A549 (cell line): ENCODE measurements at regions of chr20 and their contacts with region 1.

Region 1: DNA sequence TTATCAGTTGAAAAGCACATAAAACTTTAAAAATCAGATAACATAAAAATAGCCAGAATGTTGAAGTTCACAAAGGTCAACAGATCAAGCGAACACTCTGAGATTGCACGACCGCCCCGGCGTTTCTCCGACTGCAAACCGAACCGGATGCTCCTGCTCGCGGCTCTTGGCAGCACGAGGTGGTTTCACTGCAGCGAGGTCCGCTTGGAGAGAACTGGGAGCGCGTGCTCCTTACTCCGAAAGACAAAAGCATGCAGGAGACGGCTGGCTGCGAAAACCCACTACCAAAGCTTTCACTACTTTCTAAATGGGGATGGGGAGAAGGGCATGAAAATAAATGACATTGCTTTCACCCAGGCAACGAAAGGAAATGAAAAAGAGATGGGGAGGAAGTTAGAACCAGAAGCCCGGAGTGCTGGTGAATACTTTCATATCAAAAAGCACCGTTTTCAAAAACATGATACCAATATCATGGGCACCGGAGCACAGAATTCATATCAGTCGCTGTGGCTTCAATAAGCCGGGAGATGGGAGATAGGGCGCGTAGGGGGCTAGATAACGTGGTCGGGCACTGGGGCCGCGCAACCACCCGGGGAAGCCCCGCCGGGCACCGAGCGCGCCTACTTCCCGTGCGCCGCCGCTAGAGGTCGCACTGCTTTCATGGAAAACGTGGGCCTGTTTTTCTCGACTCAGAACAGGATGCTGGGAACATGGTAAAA is 8.3 kb upstream of the ANKRD60 start:
- DNase-seq: peak; percentile 67 to 84
- ATAC-seq: peak; percentile 94 to 95
- H3K4me3 ChIP-seq: peak overlapping the region; percentile 53
- H3K27ac ChIP-seq: peak overlapping the region; percentile 52 to 74; a peak in 5 of 6 replicates
- H3K4me1 ChIP-seq: peaks cover 4% of the 10 kb centered on the region; the same call in 1 of the 3 replicates
- CTCF ChIP-seq: peak; percentile 93
- EP300 ChIP-seq: no peak
- POLR2A ChIP-seq: no peak
- RAD21 ChIP-seq: peak; percentile 89 to 93

Region 2: GRCh38 chr20:58219301-58219700 is 17.5 kb before region 1 on chr20:
- CTCF ChIA-PET with region 1: interaction called, 29 read pairs
- POLR2A ChIA-PET with region 1: no interaction called
- DNase-seq: peak in 1 of 2 experiments; percentile 51
- ATAC-seq: peak in 1 of 2 experiments; percentile 39; a peak in 2 of 6 replicates
- H3K4me3 ChIP-seq: no peak overlapping the region
- H3K27ac ChIP-seq: 0 out of 6 replicates have a peak overlapping the region, but pooled peaks of 1 of the 2 experiments have one; percentile 8
- H3K4me1 ChIP-seq: no peaks in the 10 kb centered on the region
- CTCF ChIP-seq: no peak
- EP300 ChIP-seq: no peak
- POLR2A ChIP-seq: no peak
- RAD21 ChIP-seq: no peak

Region 3: GRCh38 chr20:58224974-58225373 is 11.8 kb before region 1 on chr20:
- CTCF ChIA-PET with region 1: interaction called, 29 read pairs
- POLR2A ChIA-PET with region 1: no interaction called
- DNase-seq: no peak
- ATAC-seq: no peak
- H3K4me3 ChIP-seq: no peak overlapping the region
- H3K27ac ChIP-seq: no peak overlapping the region
- H3K4me1 ChIP-seq: no peaks in the 10 kb centered on the region
- CTCF ChIP-seq: no peak
- EP300 ChIP-seq: no peak
- POLR2A ChIP-seq: no peak
- RAD21 ChIP-seq: no peak

Region 4: DNA sequence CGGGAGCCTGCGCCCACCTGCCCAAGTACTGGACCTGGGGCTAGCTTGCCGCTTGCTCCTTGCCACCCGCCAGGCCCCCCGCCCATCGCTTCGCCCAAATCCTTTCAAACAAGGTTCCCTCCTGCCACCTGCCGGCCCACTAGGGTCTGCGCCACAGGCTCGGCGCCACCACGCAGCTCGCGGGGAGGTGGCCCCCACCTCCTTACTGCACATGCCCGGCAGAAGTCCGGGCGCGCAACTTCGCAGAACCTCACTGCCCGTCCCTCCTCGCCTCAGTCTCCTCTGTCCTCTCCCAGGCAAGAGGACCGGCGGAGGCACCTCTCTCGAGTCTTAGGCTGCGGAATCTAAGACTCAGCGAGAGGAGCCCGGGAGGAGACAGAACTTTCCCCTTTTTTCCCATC is 602.7 kb after region 1 on chr20:
- CTCF ChIA-PET with region 1: interaction called, 12 read pairs
- POLR2A ChIA-PET with region 1: no interaction called
- DNase-seq: peak; percentile 57 to 70
- ATAC-seq: peak; percentile 87 to 92
- H3K4me3 ChIP-seq: peak overlapping the region; percentile 46
- H3K27ac ChIP-seq: no peak overlapping the region
- H3K4me1 ChIP-seq: peaks cover 8% of the 10 kb centered on the region
- CTCF ChIP-seq: peak; percentile 60
- EP300 ChIP-seq: no peak
- POLR2A ChIP-seq: no peak
- RAD21 ChIP-seq: peak; percentile 71 to 81